GM12878 (cell line): ENCODE measurements at regions of chr22 and their contacts with region 1.

Region 1: GRCh38 chr22:31661851-31662656 is at the start of gene PISD:
- DNase-seq: peak; percentile 89
- ATAC-seq: peak; percentile 87
- H3K4me3 ChIP-seq: peak within 1 kb of the TSS; percentile 79
- H3K27ac ChIP-seq: peak within 1 kb of the TSS; percentile 81
- H3K4me1 ChIP-seq: peaks cover 12% of the 10 kb centered on the region
- H3K27me3 ChIP-seq: no peaks in the 10 kb centered on the region
- CTCF ChIP-seq: no peak
- EP300 ChIP-seq: no peak
- POLR2A ChIP-seq: peak; percentile 91
- RAD21 ChIP-seq: no peak
- polyA plus RNA-seq, gene PISD: 31.1 to 44.9 TPM

Region 2: DNA sequence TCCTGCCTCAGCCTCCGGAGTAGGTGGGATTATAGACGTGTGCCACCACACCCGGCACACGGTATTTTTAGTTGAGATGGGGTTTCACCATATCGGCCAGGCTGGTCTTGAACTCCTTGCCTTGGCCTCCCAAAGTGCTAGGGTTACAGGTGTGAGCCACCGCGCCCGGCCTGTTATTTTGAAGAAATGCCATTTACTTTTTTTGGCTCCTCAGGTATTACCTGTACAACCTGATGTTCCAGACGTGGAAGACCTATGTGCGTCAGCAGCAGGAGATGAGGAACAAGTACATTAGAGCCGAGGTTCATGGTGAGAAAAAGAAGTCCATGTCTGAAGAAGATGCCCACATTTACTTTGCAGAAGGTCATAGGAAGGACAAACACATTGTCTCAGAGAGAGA is 112.0 kb before region 1 on chr22:
- CTCF ChIA-PET with region 1: no interaction called
- POLR2A ChIA-PET with region 1: no interaction called
- RAD21 ChIA-PET with region 1: no interaction called
- SMC1A ChIA-PET with region 1: no interaction called
- in situ Hi-C with region 1: no loop called
- intact Hi-C with region 1: no loop called
- DNase-seq: no peak
- ATAC-seq: no peak
- H3K4me3 ChIP-seq: no peak overlapping the region
- H3K27ac ChIP-seq: no peak overlapping the region
- H3K4me1 ChIP-seq: peaks cover 28% of the 10 kb centered on the region
- H3K27me3 ChIP-seq: no peaks in the 10 kb centered on the region
- CTCF ChIP-seq: no peak
- EP300 ChIP-seq: no peak
- POLR2A ChIP-seq: no peak
- RAD21 ChIP-seq: no peak

Region 3: DNA sequence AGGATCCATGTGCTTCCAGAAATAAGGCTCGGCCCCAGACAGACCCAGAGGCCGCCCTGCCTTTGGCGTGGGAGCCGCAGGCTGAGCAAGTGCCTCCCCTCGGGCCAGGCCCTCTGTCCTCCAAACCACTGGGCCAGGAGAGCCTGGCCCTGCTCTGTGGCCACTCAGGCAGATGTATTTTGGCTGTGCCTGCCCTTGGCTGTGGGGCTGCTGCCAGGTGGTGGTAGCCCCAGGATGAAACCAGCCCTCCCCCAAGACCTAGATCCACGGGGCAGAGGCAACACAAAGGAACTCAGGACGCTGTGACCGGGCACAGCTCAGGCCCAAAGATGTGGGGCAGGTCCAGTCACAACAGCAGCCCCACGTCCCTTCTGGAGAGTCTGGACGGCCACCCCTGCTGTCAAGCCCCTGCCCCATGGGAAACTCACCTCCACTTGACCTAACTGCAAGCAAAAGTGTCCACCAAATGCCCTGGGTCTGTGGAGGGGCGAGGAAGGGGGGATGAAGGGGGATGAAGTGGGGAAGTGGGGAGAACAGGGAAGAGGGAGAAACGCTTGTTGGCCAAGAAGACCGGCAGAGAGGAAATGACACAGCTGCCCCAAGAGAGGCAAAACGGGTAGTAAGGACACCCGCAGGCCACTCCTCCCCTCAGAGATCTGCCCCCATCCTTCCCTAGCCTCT is 24.0 kb before region 1 on chr22:
- CTCF ChIA-PET with region 1: interaction called, 51 read pairs
- POLR2A ChIA-PET with region 1: interaction called, 28 read pairs
- RAD21 ChIA-PET with region 1: interaction called, 49 read pairs
- SMC1A ChIA-PET with region 1: interaction called, 88 read pairs
- in situ Hi-C with region 1: no loop called
- intact Hi-C with region 1: no loop called
- DNase-seq: no peak
- ATAC-seq: peak; percentile 83
- H3K4me3 ChIP-seq: peak overlapping the region; percentile 71
- H3K27ac ChIP-seq: peak overlapping the region; percentile 98
- H3K4me1 ChIP-seq: peaks cover 52% of the 10 kb centered on the region
- H3K27me3 ChIP-seq: no peaks in the 10 kb centered on the region
- CTCF ChIP-seq: no peak
- EP300 ChIP-seq: 0 out of 4 replicates have a peak, but pooled peaks of 1 of the 2 experiments have one; percentile 9
- POLR2A ChIP-seq: 0 out of 2 replicates have a peak, but pooled peaks have one; percentile 56
- RAD21 ChIP-seq: no peak

Region 4: DNA sequence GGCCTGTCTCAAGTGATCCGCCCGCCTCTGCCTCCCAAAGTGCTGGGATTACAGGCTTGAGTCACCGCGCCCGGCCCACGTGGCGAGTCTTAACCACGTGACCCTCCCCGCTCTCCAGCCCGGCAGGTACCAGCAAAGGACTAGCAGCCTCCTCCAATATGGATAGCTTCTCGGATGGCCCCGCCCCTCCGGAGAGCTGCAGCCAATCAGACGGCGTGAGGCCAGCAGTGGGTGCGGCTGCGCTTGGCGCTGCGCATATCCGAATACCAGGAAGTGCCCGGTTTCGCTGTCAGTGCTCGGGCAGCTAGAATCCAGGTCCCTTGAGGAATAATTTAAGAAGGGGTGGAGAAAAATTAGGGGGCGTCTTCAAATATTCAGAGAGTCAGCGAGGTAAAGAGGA is 14.6 kb after region 1 on chr22:
- CTCF ChIA-PET with region 1: interaction called, 31 read pairs
- POLR2A ChIA-PET with region 1: interaction called, 5 read pairs
- RAD21 ChIA-PET with region 1: interaction called, 8 read pairs
- SMC1A ChIA-PET with region 1: interaction called, 10 read pairs
- in situ Hi-C with region 1: no loop called
- intact Hi-C with region 1: loop called (anchors 2 kb)
- DNase-seq: peak; percentile 66
- ATAC-seq: peak; percentile 100
- H3K4me3 ChIP-seq: peak overlapping the region; percentile 58
- H3K27ac ChIP-seq: peak overlapping the region; percentile 14
- H3K4me1 ChIP-seq: peaks cover 2% of the 10 kb centered on the region; the same call in 1 of the 2 replicates
- H3K27me3 ChIP-seq: no peaks in the 10 kb centered on the region
- CTCF ChIP-seq: no peak
- EP300 ChIP-seq: no peak
- POLR2A ChIP-seq: peak; percentile 74
- RAD21 ChIP-seq: no peak

Region 5: GRCh38 chr22:31943976-31944699 is 282.1 kb after region 1 on chr22 and contains the start of gene YWHAH:
- CTCF ChIA-PET with region 1: interaction called, 140 read pairs
- POLR2A ChIA-PET with region 1: interaction called, 6 read pairs
- RAD21 ChIA-PET with region 1: interaction called, 29 read pairs
- SMC1A ChIA-PET with region 1: interaction called, 99 read pairs
- in situ Hi-C with region 1: loop called (anchors 5 kb)
- intact Hi-C with region 1: loop called (anchors 2 kb)
- DNase-seq: peak; percentile 62
- ATAC-seq: peak; percentile 82
- H3K4me3 ChIP-seq: peak within 1 kb of the TSS; percentile 100
- H3K27ac ChIP-seq: peak within 1 kb of the TSS; percentile 83
- H3K4me1 ChIP-seq: peaks cover 13% of the 10 kb centered on the region
- H3K27me3 ChIP-seq: no peaks in the 10 kb centered on the region
- CTCF ChIP-seq: no peak
- EP300 ChIP-seq: no peak
- POLR2A ChIP-seq: peak; percentile 96
- RAD21 ChIP-seq: no peak
- polyA plus RNA-seq, gene YWHAH: 34.2 to 43.7 TPM

Region 6: GRCh38 chr22:31970490-31971444 is 308.7 kb after region 1 on chr22:
- CTCF ChIA-PET with region 1: interaction called, 46 read pairs
- POLR2A ChIA-PET with region 1: no interaction called
- RAD21 ChIA-PET with region 1: interaction called, 24 read pairs
- SMC1A ChIA-PET with region 1: interaction called, 6 read pairs
- in situ Hi-C with region 1: no loop called
- intact Hi-C with region 1: loop called (anchors 1 kb)
- DNase-seq: peak; percentile 20
- ATAC-seq: peak; percentile 95
- H3K4me3 ChIP-seq: peak overlapping the region; percentile 76; the same call in 1 of the 2 replicates
- H3K27ac ChIP-seq: no peak overlapping the region
- H3K4me1 ChIP-seq: peaks cover 14% of the 10 kb centered on the region
- H3K27me3 ChIP-seq: no peaks in the 10 kb centered on the region
- CTCF ChIP-seq: peak; percentile 84 to 98 (median 92)
- EP300 ChIP-seq: no peak
- POLR2A ChIP-seq: no peak
- RAD21 ChIP-seq: peak; percentile 67